ENCODE measurements at regions of chr5 and their contacts with region 1.

Region 1: DNA sequence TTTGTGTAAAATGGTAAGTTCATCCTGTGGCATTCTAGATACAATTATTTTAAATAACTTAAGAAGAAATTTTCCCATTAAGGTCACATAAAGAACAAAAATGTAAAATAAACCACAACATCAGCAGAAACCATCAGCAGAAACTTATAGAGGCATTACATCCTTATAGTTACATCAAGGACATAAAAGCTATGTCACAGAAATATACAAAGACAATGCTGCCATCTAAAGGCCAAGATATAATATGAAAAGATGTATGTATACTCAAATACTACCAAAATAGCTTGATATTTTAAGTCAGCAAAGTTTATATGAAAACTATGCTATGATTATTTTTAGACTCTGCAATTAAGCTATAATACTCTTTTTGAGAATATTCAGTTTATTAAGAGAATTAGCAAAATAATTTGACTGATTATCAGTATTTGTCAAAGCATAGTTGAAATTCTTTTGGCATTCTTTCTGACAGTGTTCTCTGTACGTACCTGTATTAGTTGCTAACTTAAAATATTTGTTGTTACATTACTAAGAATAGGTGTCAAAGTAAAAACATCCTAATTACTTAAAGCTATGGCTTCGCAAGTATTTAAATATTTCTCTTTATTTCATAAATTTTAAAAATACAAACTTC is 36.2 kb downstream of the FBXL17 start:
- DNase-seq: peak; percentile 67
- ATAC-seq: peak; percentile 60
- H3K4me3 ChIP-seq: no peak overlapping the region
- H3K27ac ChIP-seq: no peak overlapping the region
- H3K4me1 ChIP-seq: no peaks in the 10 kb centered on the region
- H3K27me3 ChIP-seq: no peaks in the 10 kb centered on the region
- CTCF ChIP-seq: peak; percentile 54
- POLR2A ChIP-seq: no peak
- RAD21 ChIP-seq: peak; percentile 69

Region 2: DNA sequence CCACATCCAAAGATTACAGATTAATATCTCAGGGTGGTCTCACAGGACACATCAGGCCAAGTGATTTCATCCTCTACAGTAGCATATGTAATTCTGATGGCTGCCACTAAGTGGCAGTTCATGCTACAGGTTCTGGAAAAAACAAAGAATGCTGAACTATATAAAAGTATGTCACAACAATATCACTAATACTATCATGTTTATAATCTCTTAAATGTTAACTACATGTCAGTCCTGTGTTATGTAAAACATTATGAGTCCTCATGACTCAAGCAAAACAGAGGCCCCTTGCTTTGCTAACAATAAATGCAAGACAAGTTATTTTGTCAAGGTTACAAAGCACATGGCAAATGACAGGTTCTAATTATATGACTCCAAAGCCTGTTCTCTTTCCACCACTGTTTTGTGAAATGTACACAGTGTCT is 196.9 kb before region 1 on chr5:
- CTCF ChIA-PET with region 1: no interaction called
- POLR2A ChIA-PET with region 1: no interaction called
- dilution Hi-C with region 1: no loop called
- in situ Hi-C with region 1: loop called (anchors 10 kb)
- intact Hi-C with region 1: loop called (anchors 5 kb)
- DNase-seq: peak; percentile 35
- ATAC-seq: peak; percentile 92
- H3K4me3 ChIP-seq: no peak overlapping the region
- H3K27ac ChIP-seq: no peak overlapping the region
- H3K4me1 ChIP-seq: no peaks in the 10 kb centered on the region
- H3K27me3 ChIP-seq: no peaks in the 10 kb centered on the region
- CTCF ChIP-seq: peak; percentile 55
- POLR2A ChIP-seq: no peak
- RAD21 ChIP-seq: peak; percentile 51

Region 3: GRCh38 chr5:108201721-108202120 is 143.9 kb before region 1 on chr5:
- CTCF ChIA-PET with region 1: no interaction called
- POLR2A ChIA-PET with region 1: no interaction called
- dilution Hi-C with region 1: no loop called
- in situ Hi-C with region 1: no loop called
- intact Hi-C with region 1: no loop called
- DNase-seq: no peak
- ATAC-seq: no peak
- H3K4me3 ChIP-seq: no peak overlapping the region
- H3K27ac ChIP-seq: no peak overlapping the region
- H3K4me1 ChIP-seq: no peaks in the 10 kb centered on the region
- H3K27me3 ChIP-seq: no peaks in the 10 kb centered on the region
- CTCF ChIP-seq: peak; percentile 18; the same call in 1 of the 2 replicates
- POLR2A ChIP-seq: no peak
- RAD21 ChIP-seq: no peak

Region 4: GRCh38 chr5:108260117-108260857 is 85.4 kb before region 1 on chr5:
- CTCF ChIA-PET with region 1: interaction called, 15 read pairs
- POLR2A ChIA-PET with region 1: no interaction called
- dilution Hi-C with region 1: no loop called
- in situ Hi-C with region 1: loop called (anchors 5 kb)
- intact Hi-C with region 1: loop called (anchors 1 kb)
- DNase-seq: peak; percentile 85
- ATAC-seq: peak; percentile 87
- H3K4me3 ChIP-seq: no peak overlapping the region
- H3K27ac ChIP-seq: no peak overlapping the region
- H3K4me1 ChIP-seq: no peaks in the 10 kb centered on the region
- H3K27me3 ChIP-seq: no peaks in the 10 kb centered on the region
- CTCF ChIP-seq: peak; percentile 91
- POLR2A ChIP-seq: no peak
- RAD21 ChIP-seq: peak; percentile 86